ENCODE measurements at regions of chr22 and their contacts with region 1.

Region 1: GRCh38 chr22:32080904-32081303 is 37.8 kb downstream of the SLC5A1 start:
- DNase-seq: peak; percentile 3 to 22 (median 7)
- H3K4me3 ChIP-seq: no peak overlapping the region
- H3K4me3 Mint-ChIP-seq: no peak overlapping the region
- H3K27ac ChIP-seq: no peak overlapping the region
- H3K27ac Mint-ChIP-seq: no peak overlapping the region
- H3K4me1 ChIP-seq: no peaks in the 10 kb centered on the region
- H3K4me1 Mint-ChIP-seq: peaks cover 2% of the 10 kb centered on the region
- H3K27me3 ChIP-seq: no peaks in the 10 kb centered on the region
- H3K27me3 Mint-ChIP-seq: peaks cover 2 to 11% (median 7%) of the 10 kb centered on the region in 3 donors
- CTCF ChIP-seq: peak; percentile 57

Region 2: DNA sequence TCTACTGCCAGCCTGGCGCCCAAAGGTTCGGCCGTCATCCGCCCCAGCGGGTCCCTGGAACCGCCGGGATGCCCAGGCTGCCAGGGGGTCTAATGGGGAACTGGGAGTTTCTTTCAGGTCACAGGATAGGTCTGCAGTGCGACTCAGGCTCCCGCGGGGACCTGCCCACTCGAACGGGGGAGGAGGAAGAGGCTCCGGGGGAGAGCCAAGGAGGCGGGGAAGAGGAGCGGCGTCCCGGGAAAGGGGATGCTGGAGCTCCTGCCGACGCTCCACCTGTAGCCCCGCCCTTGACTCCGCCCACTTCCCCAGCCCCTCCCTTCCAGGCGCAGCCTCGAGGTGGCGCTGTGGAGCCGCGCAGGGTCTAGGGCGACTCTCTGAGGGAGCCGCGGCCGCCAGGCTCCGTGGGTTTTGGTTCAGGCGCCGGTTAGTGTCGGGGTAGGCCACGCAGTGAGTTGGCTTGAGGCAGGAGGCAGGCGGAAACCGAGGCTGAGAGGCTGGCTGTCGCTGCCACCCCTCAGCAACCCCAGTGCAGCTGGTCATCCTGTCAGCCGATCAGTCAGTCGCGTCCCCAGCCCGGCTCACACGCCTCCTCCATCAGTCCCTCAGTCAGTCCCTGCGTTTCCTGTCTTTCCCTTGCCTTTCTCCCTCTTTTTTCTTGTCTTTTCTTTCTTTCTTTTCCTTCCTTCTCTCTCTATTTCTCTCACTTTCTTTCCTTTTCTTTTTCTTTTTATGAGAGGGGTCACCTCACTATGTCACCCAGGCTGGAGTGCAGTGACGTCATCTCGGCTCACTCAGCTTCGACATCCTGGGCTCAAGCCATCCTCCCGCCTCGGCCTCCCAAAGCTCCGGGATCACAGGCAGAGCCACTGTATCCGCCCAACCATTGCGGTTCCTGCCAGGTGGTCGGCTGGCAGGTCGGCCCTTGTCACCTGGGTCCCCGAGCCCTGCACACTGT is 110.1 kb before region 1 on chr22:
- intact Hi-C with region 1: loop called in 1 of 2 experiments (anchors 10 kb)
- DNase-seq: peak; percentile 72 to 78 (median 76)
- H3K4me3 ChIP-seq: peak overlapping the region; percentile 9 to 67 (median 33)
- H3K4me3 Mint-ChIP-seq: peak overlapping the region; percentile 76 to 83
- H3K27ac ChIP-seq: no peak overlapping the region
- H3K27ac Mint-ChIP-seq: peak overlapping the region in 4 of 7 donors; percentile 32 to 67 (median 50)
- H3K4me1 ChIP-seq: peaks cover 12 to 13% of the 10 kb centered on the region in 2 donors
- H3K4me1 Mint-ChIP-seq: peaks cover 12% of the 10 kb centered on the region
- H3K27me3 ChIP-seq: peaks cover 0 to 12% of the 10 kb centered on the region in 2 donors
- H3K27me3 Mint-ChIP-seq: peaks cover 12 to 26% (median 20%) of the 10 kb centered on the region in 3 donors
- CTCF ChIP-seq: peak; percentile 97

Region 3: DNA sequence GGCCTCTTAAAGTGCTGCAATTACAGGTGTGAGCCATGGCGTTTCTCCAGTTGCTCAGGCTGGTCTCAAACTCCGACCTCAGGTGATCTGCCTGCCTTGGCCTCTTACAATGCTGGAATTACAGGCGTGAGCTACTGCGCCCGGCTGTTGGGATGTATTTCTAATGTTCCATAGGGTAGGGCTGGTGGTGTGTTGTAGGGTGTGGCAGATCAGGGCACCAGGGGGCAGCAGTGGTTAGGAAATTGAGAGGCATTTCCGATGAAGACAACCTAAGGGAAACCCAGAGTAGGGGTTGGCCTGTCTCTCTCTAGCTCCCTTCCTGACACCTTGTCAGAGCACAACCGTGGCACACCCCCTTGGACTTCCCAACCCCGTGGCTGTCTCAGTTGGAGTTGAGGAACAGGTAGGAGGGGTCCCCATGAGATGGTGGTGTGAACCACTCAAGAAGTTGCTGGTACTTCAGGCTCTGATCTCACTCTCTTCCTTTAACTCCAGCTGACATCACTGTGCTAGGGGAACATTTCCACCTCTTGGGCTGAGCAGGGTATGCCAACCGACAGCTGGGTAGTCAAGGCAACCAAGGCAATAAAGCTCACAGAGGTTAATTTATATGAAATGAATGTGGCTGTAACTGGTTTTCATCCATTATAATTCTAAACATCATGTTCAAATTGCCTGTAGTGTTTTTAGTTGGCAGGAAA is 103.6 kb before region 1 on chr22:
- intact Hi-C with region 1: loop called (anchors 2 to 10 kb)
- DNase-seq: peak; percentile 42 to 54 (median 44)
- H3K4me3 ChIP-seq: no peak overlapping the region
- H3K4me3 Mint-ChIP-seq: no peak overlapping the region
- H3K27ac ChIP-seq: no peak overlapping the region
- H3K27ac Mint-ChIP-seq: peak overlapping the region in 1 of 7 donors; percentile 56
- H3K4me1 ChIP-seq: no peaks in the 10 kb centered on the region
- H3K4me1 Mint-ChIP-seq: no peaks in the 10 kb centered on the region
- H3K27me3 ChIP-seq: no peaks in the 10 kb centered on the region
- H3K27me3 Mint-ChIP-seq: peaks cover 0 to 10% (median 3%) of the 10 kb centered on the region in 3 donors
- CTCF ChIP-seq: peak; percentile 75

Region 4: GRCh38 chr22:32042924-32043790 is 37.7 kb before region 1 on chr22 and contains the start of gene SLC5A1:
- intact Hi-C with region 1: no loop called
- DNase-seq: no peak
- H3K4me3 ChIP-seq: no peak within 1 kb of the TSS
- H3K4me3 Mint-ChIP-seq: peak within 1 kb of the TSS in 1 of 2 donors; percentile 32
- H3K27ac ChIP-seq: no peak within 1 kb of the TSS
- H3K27ac Mint-ChIP-seq: peak within 1 kb of the TSS in 2 of 7 donors; percentile 42 to 65
- H3K4me1 ChIP-seq: no peaks in the 10 kb centered on the region
- H3K4me1 Mint-ChIP-seq: no peaks in the 10 kb centered on the region
- H3K27me3 ChIP-seq: peaks cover 25 to 38% of the 10 kb centered on the region in 2 donors
- H3K27me3 Mint-ChIP-seq: peaks cover 36 to 62% (median 43%) of the 10 kb centered on the region in 3 donors
- CTCF ChIP-seq: no peak
- polyA plus RNA-seq, gene SLC5A1: not detected

Measured in CD14-positive monocyte (primary cell).